Calu3 (cell line): ENCODE measurements at regions of chr12 and their contacts with region 1.

Region 1: DNA sequence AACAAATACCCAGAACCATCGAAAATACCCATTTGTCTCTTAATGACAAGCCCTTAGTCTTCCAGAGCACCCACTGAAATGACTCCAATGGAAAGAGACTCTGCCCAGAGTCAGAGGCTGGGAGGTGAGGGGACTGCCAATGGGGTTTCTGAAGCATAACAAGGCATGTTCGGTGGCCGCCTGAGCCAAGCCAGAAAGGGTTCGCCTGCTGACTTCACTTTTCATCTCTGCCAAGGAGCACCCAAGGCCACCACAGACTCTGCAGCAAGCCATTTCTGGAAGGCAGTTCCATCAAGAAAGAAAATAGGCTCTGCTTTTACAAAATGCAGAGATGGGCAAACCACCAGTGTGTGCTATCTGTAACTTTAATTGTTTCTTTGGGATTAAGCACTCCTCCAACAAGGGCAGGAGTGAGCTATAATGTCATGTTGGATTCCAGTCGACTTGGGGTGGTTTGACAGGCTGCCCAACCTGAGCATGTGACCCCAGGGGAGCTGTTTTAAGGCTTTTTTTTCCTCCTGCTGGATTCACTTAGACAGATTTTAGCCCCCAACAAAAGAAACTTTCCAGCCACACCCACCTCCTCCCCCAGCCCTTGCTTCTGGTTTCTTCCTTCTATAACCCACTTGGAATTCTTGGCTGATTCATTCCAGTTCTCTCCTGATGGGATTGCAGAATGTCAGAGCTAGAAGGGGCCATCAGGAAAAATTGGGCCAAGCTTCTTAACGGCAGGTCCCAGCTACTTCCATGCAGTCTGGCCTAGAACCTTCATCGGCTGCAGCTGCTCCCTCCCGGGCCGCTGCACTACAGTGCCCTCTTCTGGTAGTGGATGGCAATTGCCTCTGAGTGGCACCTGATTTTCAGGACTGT is 24.1 kb downstream of the CKAP4 start:
- DNase-seq: peak; percentile 82
- H3K4me3 Mint-ChIP-seq: no peak overlapping the region
- H3K27ac Mint-ChIP-seq: no peak overlapping the region
- H3K4me1 Mint-ChIP-seq: peaks cover 12% of the 10 kb centered on the region
- H3K27me3 Mint-ChIP-seq: peaks cover 20% of the 10 kb centered on the region
- CTCF ChIP-seq: peak; percentile 91

Region 2: DNA sequence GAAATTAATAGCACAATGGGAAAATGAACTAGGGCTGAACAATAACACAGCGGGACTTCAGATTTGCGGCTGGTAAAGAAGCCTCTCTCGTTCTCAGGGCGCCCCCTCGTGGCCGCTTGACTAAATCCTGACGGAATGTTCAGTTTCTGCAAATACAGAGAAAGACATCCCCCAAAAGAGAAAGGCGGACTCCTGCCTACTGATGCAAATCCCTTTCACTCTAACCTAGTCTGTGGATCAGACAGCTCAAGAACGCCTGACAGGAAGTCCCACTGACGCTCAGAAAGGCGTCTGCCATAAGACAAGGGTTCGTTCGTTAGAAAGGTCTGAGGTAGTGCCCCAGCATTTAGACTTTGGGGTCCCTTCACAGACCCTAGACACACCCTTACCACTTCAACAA is 87.5 kb before region 1 on chr12:
- CTCF ChIA-PET with region 1: interaction called, 6 read pairs
- intact Hi-C with region 1: loop called (anchors 5 kb)
- DNase-seq: peak; percentile 92
- H3K4me3 Mint-ChIP-seq: peak overlapping the region; percentile 78
- H3K27ac Mint-ChIP-seq: no peak overlapping the region
- H3K4me1 Mint-ChIP-seq: peaks cover 57% of the 10 kb centered on the region
- H3K27me3 Mint-ChIP-seq: no peaks in the 10 kb centered on the region
- CTCF ChIP-seq: peak; percentile 85

Region 3: GRCh38 chr12:106163712-106164111 is 60.0 kb before region 1 on chr12:
- CTCF ChIA-PET with region 1: no interaction called
- intact Hi-C with region 1: no loop called
- DNase-seq: no peak
- H3K4me3 Mint-ChIP-seq: no peak overlapping the region
- H3K27ac Mint-ChIP-seq: no peak overlapping the region
- H3K4me1 Mint-ChIP-seq: no peaks in the 10 kb centered on the region
- H3K27me3 Mint-ChIP-seq: peaks cover 78% of the 10 kb centered on the region
- CTCF ChIP-seq: no peak

Region 4: DNA sequence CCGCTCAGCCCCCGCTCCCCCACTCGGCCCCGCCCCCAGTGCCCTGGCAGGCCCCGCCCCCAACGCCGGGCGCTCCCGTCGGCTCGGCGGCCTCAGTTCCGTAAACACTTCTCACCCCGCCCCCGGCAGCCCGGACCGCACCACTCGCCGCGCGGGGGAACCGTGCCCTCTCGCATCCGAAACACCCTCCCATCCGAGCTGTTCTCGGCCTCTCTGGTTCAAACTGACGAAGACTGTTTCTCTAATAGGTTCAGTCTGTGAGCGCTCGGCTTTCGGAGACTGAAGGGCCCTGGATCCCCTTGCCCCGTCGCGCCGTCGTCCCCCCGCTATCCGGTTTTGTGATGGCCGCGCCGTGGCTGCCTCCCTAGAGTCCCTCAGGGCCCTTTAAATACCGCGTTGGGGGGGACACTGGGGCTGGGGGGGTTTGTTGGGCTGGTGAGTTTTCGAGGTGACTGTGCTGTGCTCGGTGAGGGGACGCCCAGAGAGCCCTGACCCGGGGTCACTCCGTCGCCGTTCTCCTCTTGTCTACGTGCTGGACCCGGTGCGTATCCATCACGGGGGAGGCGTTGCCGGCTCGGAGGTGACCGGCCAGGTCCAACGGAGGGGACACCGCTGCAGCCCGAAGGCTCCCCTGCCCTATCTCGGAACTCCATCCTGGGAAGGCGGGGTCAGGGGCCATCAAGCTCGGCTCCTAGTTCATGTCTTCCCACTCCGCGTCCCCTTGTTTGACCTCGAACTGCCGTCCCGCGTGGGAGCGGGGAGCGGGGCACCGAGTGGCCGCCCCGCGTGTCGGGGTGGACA is 78.9 kb after region 1 on chr12 and contains the start of gene TCP11L2:
- CTCF ChIA-PET with region 1: interaction called, 5 read pairs
- intact Hi-C with region 1: loop called (anchors 5 kb)
- DNase-seq: peak; percentile 94
- H3K4me3 Mint-ChIP-seq: peak within 1 kb of the TSS; percentile 85
- H3K27ac Mint-ChIP-seq: peak within 1 kb of the TSS; percentile 99
- H3K4me1 Mint-ChIP-seq: peaks cover 60% of the 10 kb centered on the region
- H3K27me3 Mint-ChIP-seq: no peaks in the 10 kb centered on the region
- CTCF ChIP-seq: no peak
- total RNA-seq, gene TCP11L2: 30.7 and 37.7 TPM in 2 replicates

Region 5: DNA sequence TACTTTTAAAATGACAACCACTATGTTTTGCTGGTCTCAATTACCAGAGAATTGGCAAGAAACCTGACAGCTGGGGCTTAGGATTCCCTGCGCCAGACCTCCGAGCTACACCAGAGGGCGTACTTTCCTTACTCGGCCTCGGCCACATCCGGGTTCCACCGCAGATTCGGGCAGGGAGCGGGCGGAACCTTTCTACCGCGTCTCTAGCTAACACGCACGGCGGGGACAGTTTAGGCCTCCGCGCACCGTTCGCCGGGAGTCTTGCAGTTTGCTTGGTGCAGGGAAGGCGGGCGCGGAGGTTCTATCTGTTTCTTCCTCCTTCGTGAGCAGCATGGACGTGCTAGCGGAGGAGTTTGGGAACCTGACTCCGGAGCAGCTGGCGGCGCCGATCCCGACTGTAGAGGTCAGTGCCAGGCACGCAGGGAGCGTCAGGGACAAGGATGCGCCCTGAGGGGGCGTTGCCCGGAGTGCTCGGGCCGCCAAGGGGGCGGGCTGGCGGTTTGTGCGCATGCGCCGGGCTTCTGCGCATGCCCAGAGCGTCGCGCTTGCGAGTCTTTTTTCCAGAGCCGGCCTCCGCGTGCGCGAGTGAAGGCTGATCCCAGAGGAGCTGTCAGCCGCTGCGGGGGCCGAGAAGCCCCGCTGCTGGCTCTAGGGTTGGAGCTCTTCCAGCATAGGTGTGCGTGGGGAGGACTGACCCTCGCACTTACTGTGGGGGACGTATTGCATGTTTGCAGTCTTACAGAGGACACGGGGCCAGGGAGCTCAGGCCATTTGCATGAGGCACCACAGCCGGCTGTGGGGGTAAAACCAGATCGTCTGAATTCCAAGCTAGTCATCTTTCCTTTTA is 134.1 kb after region 1 on chr12 and contains the start of gene POLR3B:
- CTCF ChIA-PET with region 1: interaction called, 17 read pairs
- intact Hi-C with region 1: no loop called
- DNase-seq: peak; percentile 97
- H3K4me3 Mint-ChIP-seq: peak within 1 kb of the TSS; percentile 84
- H3K27ac Mint-ChIP-seq: peak within 1 kb of the TSS; percentile 97
- H3K4me1 Mint-ChIP-seq: peaks cover 17% of the 10 kb centered on the region
- H3K27me3 Mint-ChIP-seq: no peaks in the 10 kb centered on the region
- CTCF ChIP-seq: peak; percentile 83
- total RNA-seq, gene POLR3B: 13.6 and 13.9 TPM in 2 replicates

Region 6: GRCh38 chr12:106919910-106920544 is 696.3 kb after region 1 on chr12:
- CTCF ChIA-PET with region 1: interaction called, 3 read pairs
- intact Hi-C with region 1: loop called (anchors 2 kb)
- DNase-seq: peak; percentile 48
- H3K4me3 Mint-ChIP-seq: no peak overlapping the region
- H3K27ac Mint-ChIP-seq: no peak overlapping the region
- H3K4me1 Mint-ChIP-seq: peaks cover 8% of the 10 kb centered on the region
- H3K27me3 Mint-ChIP-seq: no peaks in the 10 kb centered on the region
- CTCF ChIP-seq: peak; percentile 58